CD14-positive monocyte (primary cell): ENCODE measurements at regions of chr14 and their contacts with region 1.

Region 1: GRCh38 chr14:61589691-61590521 is 105.4 kb upstream of the HIF1A start:
- DNase-seq: no peak
- H3K4me3 ChIP-seq: no peak overlapping the region
- H3K4me3 Mint-ChIP-seq: no peak overlapping the region
- H3K27ac ChIP-seq: no peak overlapping the region
- H3K27ac Mint-ChIP-seq: peak overlapping the region in 1 of 7 donors; percentile 4
- H3K4me1 ChIP-seq: peaks cover 16 to 23% of the 10 kb centered on the region in 2 donors
- H3K4me1 Mint-ChIP-seq: peaks cover 33% of the 10 kb centered on the region
- H3K27me3 ChIP-seq: no peaks in the 10 kb centered on the region
- H3K27me3 Mint-ChIP-seq: peaks cover 0 to 5% (median 2%) of the 10 kb centered on the region in 3 donors
- CTCF ChIP-seq: no peak

Region 2: DNA sequence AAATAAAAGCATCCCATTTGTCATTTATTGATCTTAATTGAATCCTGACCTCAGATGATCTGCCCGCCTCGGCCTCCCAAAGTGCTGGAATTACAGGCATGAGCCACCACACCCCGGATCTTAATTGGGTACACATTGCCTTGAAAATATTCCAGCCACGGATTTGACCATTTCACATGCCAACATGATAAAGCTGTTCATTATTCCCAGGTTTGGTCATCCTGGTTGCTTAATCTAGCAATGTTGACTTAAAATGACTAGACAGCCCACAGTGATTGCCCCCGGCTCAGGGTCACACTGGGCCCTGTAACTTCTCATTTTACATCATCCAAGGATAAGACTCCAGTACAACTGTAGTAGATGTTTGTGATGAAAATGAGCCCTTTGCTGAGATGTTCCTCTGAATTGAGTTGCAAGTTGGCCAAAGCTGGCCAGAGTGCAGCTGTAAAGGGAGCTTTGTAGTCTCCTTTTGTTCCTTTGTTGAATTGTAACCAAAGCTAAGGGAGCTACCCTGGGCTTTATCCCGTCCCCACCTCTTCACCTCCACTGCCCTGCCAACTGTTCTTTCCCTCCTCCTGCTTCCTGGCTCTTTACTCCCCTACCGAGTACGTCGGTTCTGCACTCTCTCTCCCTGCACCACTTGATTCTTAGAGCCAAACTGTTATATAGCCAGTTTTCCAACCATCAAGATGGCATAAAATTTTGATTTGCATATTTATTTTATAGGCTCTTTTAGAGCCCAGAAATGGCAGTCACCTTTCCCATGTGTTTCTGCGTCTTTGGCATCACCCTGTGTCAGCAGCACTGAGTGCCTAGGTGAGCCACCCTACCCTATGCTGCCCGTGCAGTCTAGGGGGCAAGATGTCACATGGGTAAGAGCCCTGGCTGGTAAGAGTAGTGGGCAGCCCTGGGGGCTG is 35.9 kb before region 1 on chr14:
- intact Hi-C with region 1: loop called in 1 of 2 experiments (anchors 5 kb)
- DNase-seq: peak; percentile 80 to 93 (median 90)
- H3K4me3 ChIP-seq: peak overlapping the region in 1 of 3 experiments; percentile 3
- H3K4me3 Mint-ChIP-seq: peak overlapping the region; percentile 55 to 59
- H3K27ac ChIP-seq: peak overlapping the region; percentile 92 to 94
- H3K27ac Mint-ChIP-seq: peak overlapping the region; percentile 98 to 100 (median 98)
- H3K4me1 ChIP-seq: peaks cover 35 to 47% of the 10 kb centered on the region in 2 donors
- H3K4me1 Mint-ChIP-seq: peaks cover 50% of the 10 kb centered on the region
- H3K27me3 ChIP-seq: no peaks in the 10 kb centered on the region
- H3K27me3 Mint-ChIP-seq: no peaks in the 10 kb centered on the region
- CTCF ChIP-seq: no peak

Region 3: DNA sequence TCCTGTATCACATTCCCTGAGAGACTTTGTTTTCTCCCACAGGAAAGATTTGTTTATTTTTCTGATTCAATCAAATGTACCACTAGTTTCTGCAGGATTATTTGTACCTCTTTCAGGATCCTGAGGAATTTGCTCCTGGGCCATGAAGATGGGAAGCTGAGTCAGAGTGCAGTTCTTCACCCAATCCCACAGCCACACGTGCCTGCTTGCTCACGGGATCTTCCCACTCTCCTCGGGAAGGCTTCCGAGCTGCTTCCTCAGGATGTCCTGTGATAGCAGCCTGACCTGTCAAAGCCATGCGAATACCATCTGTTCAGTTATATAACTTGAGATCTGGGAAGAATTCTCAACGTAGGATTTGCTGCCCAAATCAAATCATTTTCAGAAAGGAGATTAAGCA is 63.6 kb after region 1 on chr14:
- intact Hi-C with region 1: no loop called
- DNase-seq: peak in 1 of 3 donors; percentile 46
- H3K4me3 ChIP-seq: no peak overlapping the region
- H3K4me3 Mint-ChIP-seq: no peak overlapping the region
- H3K27ac ChIP-seq: no peak overlapping the region
- H3K27ac Mint-ChIP-seq: peak overlapping the region in 2 of 7 donors; percentile 10 to 26
- H3K4me1 ChIP-seq: peaks cover 5 to 11% of the 10 kb centered on the region in 2 donors
- H3K4me1 Mint-ChIP-seq: peaks cover 15% of the 10 kb centered on the region
- H3K27me3 ChIP-seq: no peaks in the 10 kb centered on the region
- H3K27me3 Mint-ChIP-seq: peaks cover 0 to 6% (median 2%) of the 10 kb centered on the region in 3 donors
- CTCF ChIP-seq: no peak